Cardiac septum (tissue), 1 donor: ENCODE measurements at regions of chr10 and their contacts with region 1.

Region 1: DNA sequence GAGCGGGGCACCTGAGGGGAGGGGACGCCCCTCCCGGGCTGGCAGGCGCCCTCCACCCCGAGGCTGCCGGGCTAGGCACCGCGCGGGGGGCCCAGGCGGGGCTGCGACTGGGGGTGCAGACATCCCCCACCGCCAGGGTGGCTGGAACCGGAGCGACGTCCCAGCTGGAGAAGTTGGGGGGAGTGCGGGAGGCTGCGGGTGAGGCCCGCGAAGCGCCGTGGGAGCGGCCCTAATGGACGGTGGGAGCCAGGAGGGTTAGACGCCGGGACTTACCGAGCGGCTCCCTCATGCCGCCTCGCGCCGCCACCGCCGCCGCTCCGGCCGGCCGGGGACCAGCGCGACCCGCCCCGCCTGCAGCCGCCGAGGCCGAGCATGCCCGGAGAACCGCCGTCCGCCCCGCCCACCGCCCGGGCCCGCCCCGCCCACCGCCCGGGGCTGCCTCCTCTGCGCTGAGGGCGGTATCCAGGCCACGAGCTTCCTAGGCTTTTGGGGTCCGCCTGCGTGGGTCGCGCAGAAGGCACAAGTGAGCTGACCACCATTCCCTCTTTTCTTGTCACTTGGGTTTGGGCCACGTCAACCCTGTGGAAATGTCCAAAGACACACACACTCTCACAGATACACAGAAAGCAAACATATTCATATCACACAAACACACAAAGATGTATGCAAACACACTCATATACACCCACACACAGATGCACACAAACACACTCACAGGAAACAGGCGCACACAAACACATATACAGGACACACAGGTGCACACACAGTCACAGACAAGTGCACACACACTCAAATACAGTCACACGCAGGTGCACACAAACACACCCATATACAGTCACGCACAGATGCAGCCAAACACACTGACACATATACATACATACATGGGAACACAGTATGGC is at the start of gene JCAD:
- DNase-seq: peak; percentile 88
- total RNA-seq, gene JCAD: 19.3 TPM

Region 2: DNA sequence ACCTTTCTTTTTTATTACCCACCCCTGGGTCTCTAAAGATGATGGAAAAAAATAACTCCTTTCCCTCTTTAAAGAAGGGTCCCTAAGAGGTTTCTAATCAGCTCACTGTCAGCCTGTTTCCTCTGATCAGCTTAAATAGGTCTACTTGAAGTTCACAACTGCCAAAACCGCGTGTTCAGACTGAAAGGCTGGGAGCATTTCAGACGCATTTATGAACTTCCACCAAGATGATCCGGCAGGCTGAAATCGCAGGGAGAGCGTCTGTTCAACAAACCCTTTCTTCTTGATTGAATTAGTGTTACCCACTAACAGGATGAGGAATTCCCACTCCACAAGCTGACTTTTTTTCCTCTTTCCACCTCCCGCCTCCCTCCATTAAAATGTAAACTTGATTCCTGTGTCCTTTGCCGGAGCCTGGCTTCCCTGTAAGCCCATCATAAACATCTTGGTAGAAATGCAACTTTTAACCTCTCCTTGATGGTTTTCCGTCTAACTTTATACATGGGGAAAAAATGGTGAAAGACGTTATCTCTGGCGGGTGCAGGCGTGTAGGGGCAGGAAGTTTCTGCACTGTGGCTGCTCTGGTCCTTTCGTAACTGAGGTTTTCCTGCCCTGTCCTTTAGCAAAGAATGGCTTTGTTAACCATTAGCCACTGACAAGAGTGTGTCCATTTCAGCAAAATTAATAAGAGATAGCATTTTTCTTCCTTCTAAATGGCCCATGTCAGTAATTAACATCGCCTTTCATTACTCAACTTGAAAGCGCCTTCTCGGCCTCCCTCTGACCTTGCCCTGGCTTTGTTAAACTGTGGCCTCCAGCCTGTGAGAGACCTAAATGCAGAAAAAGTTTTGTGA is 1251.5 kb before region 1 on chr10:
- intact Hi-C with region 1: loop called (anchors 10 kb)
- DNase-seq: no peak

Region 3: DNA sequence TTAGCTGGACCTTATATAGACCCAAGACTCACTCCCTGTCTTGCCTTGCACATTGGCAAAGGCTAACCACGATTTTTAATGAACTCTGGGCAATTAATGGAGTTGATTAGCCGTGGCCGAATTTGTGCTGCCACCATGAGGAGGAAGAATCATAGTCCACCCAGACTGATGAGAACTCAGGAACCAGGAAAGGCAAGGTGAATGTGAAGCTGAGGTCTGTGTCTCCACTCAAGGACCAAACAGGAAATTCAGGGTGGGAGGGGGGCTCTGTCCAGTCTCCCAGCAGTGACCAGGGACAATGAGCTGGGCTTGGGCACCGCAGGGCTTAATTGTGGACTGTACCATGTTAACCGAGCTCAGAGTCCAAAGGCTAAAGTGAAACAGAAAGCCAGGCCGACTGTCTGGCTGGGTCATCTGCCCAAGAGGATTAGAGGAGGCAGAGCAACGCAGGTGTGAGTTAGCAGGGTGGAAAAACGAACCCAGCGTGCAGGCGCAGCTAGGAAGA is 127.0 kb after region 1 on chr10:
- intact Hi-C with region 1: loop called (anchors 5 kb)
- DNase-seq: no peak

Region 4: GRCh38 chr10:30199376-30200016 is 140.0 kb after region 1 on chr10:
- intact Hi-C with region 1: no loop called
- DNase-seq: no peak